Head of caudate nucleus (tissue), 42 donors: ENCODE measurements at regions of chr12 and their contacts with region 1.

Region 1: DNA sequence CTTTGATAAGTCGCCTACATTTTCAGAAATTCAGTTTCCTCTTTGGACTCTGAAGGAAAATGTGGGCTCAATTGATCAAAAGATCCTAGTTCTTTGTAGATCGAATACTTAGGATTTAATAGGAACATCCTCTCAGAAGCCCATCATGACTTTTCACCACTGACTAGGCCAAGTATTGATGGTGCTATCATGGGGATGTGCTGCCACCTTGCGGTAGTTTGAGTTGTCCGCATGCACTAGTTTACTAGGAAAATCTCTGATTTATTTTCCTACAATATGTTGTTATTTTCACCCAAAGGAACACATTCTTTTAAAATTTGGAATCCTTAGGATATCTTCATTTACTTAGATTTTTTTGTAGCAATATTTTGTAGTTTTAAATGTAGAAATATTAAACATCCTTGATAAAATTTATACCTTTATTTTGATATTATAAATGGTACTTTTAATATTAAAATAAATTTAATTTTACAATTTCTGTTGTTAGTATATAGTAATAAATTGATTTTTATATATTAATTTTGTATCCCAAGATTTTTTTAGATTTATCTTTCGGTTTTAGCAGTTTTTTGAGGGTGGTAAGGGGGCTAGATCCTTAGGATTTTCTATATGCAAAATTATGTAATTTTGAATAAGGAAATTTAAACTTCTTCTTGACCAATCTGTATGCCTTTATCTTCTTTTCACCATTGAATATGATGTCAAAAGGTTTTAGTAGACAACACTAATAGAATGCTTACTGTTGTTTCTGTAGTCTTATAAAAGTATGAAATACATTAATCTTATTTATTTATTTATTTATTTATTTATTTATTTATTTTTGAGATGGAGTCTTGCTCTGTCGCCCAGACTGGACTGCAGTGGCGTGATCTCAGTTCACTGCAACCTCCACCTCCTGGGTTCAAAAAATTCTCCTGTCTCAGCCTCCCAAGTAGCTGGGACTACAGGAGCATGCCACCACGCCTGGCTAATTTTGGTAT is 52.9 kb upstream of the OR9K2 start:
- DNase-seq: peak; percentile 63 to 94 (median 86)

Region 2: GRCh38 chr12:54977155-54977554 is 96.2 kb before region 1 on chr12:
- intact Hi-C with region 1: loop called (anchors 5 kb)
- DNase-seq: no peak

Region 3: DNA sequence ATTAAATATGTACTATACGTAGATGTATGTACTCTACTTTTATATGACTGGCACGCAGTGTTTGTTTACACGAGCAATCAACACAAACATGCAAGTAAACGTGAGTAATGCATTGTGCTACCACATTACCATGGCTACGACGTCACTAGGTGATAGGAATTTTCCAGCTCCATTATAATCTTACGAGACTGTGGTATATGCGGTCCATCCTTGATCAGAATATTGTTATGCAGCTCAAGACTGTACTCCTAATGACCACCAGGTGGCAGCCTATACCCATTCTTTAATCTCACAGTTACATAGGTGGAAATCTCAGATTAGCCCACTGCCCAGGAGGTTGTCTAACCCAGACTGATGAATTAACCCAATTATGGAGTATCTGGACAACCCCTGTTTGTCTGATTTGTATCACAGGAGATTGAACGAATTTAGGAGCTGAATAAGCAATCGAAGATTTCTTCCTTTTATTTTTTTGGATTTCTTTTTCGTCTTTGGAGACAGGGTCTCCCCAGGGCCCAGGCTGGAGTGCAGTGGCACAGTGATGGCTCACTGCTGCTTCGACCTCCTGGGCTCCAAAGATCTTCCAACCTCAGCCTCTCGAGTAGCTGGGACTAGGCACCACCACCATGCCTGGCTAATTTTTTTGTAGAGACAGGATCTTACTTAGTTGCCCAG is 80.0 kb before region 1 on chr12:
- intact Hi-C with region 1: loop called (anchors 1 kb)
- DNase-seq: peak in 37 of 42 donors; percentile 21 to 90 (median 71)

Region 4: GRCh38 chr12:55246159-55246558 is 172.8 kb after region 1 on chr12:
- intact Hi-C with region 1: no loop called
- DNase-seq: no peak

Region 5: GRCh38 chr12:56387152-56387736 is 1313.9 kb after region 1 on chr12:
- intact Hi-C with region 1: no loop called
- DNase-seq: no peak